HEK293 (cell line): ENCODE measurements at regions of chr22 and their contacts with region 1.

Region 1: DNA sequence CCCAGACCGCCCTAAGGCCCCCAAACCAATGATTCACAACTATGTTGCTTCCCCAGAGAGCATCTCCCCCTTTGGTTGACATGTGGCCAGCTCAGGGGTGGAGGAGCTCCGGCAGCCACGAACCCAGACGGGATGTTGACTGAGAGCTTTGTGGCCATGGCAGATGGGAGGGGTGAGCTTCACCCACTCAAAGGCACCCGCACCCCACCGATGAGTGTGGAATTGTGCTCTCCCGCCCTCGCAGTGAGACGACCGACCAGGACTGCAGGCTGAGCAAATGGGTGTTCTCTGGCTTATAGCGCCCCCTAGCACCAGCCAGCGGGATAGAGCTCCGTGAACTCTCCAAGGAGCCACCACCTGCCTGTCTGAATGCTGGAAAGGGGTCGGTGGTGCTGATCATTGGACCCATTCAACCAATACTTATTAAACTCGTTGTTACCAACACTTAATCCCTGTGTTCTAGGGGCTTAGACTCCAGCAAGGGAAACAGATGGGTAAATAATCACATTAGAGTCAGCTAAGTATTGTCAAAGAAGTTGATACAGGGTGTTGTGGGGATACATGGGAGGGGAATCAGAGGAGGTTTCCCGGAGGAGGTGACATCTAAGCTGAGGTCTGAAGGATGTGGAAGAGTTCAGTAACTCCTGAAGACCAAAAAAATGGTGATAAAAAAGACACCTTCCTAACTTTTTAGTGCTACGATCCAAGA is 4.5 kb upstream of the TIMP3 start:
- H3K4me3 ChIP-seq: no peak overlapping the region
- H3K27ac ChIP-seq: no peak overlapping the region
- H3K4me1 ChIP-seq: 0 out of 2 replicates have a peak, but pooled peaks cover 2% of the 10 kb centered on the region
- CTCF ChIP-seq: peak; percentile 86

Region 2: DNA sequence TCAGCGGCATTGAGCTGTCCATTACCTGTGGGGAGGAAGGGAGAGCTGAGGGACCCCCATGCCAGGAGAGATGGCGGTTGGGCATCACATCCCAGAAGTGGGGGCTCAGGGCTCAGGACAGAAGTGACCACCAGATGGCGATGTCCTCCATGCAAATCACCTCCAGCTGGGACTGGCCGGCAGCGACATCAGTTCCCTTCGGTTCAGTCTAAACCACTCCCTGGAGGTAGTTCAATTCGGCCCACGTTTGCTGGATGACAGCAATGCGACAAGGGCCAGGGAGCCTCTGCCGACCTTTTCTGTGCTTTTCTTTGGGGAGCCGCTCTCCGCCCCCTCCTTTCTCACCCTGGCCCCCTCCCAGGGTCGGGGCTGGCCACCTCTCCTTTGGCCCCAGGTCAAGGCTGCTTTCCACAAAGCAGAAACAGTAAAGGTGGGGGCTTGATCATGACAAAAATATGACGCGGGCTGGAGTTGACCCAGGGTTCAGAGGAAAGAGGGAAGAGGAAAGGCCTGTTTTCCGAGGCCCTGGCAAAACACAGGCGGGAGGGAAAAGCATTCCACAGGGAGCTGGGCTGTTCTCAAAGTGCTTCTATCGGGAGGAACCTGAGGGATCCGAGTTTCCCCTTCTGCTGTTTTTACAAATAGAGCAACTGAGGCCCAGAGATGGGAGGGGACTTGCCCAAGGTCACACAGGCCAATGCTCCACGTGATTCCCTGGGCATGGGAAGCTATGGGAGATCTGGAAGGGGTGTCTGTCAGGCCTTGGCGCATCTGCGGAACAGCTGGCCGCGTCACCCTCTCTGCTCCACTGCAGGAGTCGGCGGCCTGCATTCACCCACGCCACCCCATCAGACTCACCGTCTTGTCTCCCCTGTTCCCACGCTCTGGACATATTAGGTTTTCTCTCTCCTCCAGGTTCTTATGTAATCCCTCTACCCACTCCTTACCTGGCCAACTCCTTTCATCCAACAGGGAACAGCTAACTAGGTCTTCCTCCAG is 267.7 kb before region 1 on chr22:
- CTCF ChIA-PET with region 1: interaction called, 238 read pairs
- POLR2A ChIA-PET with region 1: interaction called, 7 read pairs
- H3K4me3 ChIP-seq: no peak overlapping the region
- H3K27ac ChIP-seq: no peak overlapping the region
- H3K4me1 ChIP-seq: peaks cover 5% of the 10 kb centered on the region
- CTCF ChIP-seq: peak; percentile 86

Region 3: GRCh38 chr22:32628628-32629572 is 168.1 kb before region 1 on chr22:
- CTCF ChIA-PET with region 1: interaction called, 21 read pairs
- POLR2A ChIA-PET with region 1: no interaction called
- H3K4me3 ChIP-seq: no peak overlapping the region
- H3K27ac ChIP-seq: no peak overlapping the region
- H3K4me1 ChIP-seq: peaks cover 3% of the 10 kb centered on the region
- CTCF ChIP-seq: no peak

Region 4: DNA sequence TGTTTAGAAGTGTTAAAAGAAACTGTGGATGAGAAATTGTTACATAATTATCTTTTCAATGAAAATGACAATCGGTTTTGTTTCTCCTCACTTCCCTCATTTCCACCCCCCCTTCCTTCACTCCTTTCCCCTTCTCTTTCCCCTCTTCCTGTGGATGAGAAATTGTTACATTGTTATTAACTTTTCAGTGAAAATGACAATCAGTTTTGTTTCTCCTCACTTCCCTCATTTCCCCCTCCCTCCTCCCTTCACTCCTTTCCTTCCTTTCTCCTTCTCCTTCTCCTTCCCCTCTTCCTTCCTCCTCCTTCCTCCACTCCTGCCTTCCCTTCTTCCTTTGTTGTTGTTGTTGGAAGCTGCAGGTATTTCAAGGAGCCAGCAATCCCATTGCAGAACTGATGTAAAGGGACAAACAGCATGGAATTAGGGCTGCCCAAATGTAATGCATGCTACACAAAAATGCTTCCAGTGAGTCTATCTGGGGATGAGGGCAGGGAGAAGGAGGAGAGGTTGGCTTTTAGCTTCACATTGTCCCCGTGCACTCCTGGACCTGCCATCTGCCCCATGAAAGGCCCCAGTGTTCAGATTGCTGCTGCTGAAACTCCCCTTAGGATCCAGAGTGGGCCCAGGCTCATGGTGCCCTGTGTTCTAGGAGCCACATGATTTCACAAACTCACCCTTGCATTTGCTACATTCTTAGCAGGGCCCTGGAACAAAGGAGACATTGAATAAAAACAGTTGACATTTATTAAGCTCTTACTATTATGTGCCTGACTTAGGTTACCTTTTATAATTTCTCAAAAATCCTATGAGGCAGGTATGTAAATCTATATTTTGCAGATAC is 128.5 kb before region 1 on chr22:
- CTCF ChIA-PET with region 1: interaction called, 251 read pairs
- POLR2A ChIA-PET with region 1: interaction called, 6 read pairs
- H3K4me3 ChIP-seq: no peak overlapping the region
- H3K27ac ChIP-seq: no peak overlapping the region
- H3K4me1 ChIP-seq: no peaks in the 10 kb centered on the region
- CTCF ChIP-seq: no peak

Region 5: GRCh38 chr22:32810561-32811004 is 13.6 kb after region 1 on chr22:
- CTCF ChIA-PET with region 1: interaction called, 54 read pairs
- POLR2A ChIA-PET with region 1: interaction called, 9 read pairs
- H3K4me3 ChIP-seq: no peak overlapping the region
- H3K27ac ChIP-seq: no peak overlapping the region
- H3K4me1 ChIP-seq: peaks cover 3% of the 10 kb centered on the region
- CTCF ChIP-seq: no peak

Region 6: GRCh38 chr22:32985899-32986765 is 189.1 kb after region 1 on chr22:
- CTCF ChIA-PET with region 1: interaction called, 17 read pairs
- POLR2A ChIA-PET with region 1: interaction called, 7 read pairs
- H3K4me3 ChIP-seq: no peak overlapping the region
- H3K27ac ChIP-seq: no peak overlapping the region
- H3K4me1 ChIP-seq: no peaks in the 10 kb centered on the region
- CTCF ChIP-seq: peak; percentile 75

Region 7: DNA sequence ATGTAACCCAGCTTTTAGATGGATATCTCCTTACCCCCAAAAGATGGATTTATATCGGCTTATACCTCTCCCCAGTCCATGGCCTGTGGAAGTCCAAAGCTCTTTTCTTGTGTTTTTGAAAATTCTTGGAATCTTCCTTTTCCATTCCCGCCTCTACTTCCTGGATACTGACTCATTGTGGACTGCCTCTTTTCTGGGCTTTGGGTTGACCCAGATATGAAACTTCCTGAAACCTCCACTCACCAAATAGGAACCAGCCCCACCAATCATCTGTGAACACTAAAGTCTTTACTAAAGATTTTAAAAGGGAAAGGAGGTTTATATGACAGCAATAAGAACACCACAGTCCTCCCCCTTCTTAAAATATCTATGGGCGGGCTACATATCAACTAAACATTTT is 424.5 kb after region 1 on chr22:
- CTCF ChIA-PET with region 1: no interaction called
- POLR2A ChIA-PET with region 1: no interaction called
- H3K4me3 ChIP-seq: no peak overlapping the region
- H3K27ac ChIP-seq: no peak overlapping the region
- H3K4me1 ChIP-seq: no peaks in the 10 kb centered on the region
- CTCF ChIP-seq: no peak